Activated CD4-positive, alpha-beta T cell treated with anti-CD3 and anti-CD28 coated beads, Interleukin-2, amount 10 ng/mL, durations not matched to agents 24 days and 14 days (primary cell): ENCODE measurements at regions of chr1 and their contacts with region 1.

Region 1: GRCh38 chr1:23273450-23274133 is 56.3 kb upstream of the HTR1D start:
- DNase-seq: no peak
- H3K4me3 Mint-ChIP-seq: no peak overlapping the region
- H3K27ac Mint-ChIP-seq: no peak overlapping the region
- H3K4me1 Mint-ChIP-seq: no peaks in the 10 kb centered on the region
- H3K27me3 Mint-ChIP-seq: peaks cover 14% of the 10 kb centered on the region

Region 2: DNA sequence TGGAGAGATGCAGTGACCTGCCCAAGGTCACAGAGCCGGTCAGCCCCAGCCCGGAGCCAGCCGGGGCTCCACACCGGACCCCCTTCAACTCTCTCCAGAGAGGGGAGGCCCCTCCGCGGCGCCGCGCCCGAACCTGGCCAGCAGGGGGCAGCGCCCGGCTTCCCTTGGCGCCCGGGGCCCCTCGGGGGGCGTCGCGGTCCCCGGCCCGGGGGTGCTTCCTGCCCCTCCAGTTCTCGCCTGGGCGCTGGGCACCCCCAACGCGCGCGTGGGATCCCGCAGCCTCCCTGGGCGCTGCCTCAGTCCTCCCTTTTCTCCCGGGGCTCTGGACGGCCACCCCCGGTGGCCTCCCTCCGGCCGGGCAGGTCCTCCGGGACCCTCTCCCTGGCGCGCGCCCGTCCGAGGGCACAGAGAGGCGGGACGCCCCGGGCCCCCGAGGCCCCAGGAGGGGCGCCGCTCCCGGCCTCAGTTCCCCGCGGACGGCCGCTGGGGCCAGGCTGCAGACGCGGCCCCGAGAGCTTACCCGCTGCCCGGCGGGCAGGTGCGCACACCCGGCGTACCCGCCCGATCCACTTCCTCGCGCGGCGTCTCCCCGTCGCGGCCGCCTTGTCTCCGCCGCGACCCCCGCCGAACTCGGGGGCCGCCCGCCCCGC is 56.7 kb before region 1 on chr1:
- intact Hi-C with region 1: loop called (anchors 10 kb)
- DNase-seq: peak; percentile 74
- H3K4me3 Mint-ChIP-seq: peak overlapping the region; percentile 22
- H3K27ac Mint-ChIP-seq: no peak overlapping the region
- H3K4me1 Mint-ChIP-seq: peaks cover 4% of the 10 kb centered on the region
- H3K27me3 Mint-ChIP-seq: peaks cover 74% of the 10 kb centered on the region

Region 3: GRCh38 chr1:23249787-23250454 is 23.7 kb before region 1 on chr1:
- intact Hi-C with region 1: no loop called
- DNase-seq: no peak
- H3K4me3 Mint-ChIP-seq: no peak overlapping the region
- H3K27ac Mint-ChIP-seq: no peak overlapping the region
- H3K4me1 Mint-ChIP-seq: no peaks in the 10 kb centered on the region
- H3K27me3 Mint-ChIP-seq: peaks cover 8% of the 10 kb centered on the region

Region 4: DNA sequence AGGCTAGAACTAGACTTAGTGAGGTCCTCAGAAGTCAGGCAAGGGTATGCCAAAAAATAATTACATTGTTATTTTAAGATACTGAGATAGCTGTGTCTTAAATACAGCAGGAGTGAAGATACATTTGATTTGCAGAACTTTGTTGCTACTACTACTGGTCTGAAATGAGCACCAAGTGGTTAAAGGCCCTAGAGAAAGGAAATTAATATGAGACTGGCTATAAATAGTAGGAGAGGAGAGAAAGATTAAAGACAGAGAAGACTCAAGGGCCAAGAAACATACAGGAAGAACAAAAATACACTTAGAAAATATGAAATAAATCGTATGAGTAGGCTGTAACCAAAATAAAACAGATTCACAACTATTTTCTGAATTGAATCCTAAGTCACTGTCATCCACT is 49.2 kb after region 1 on chr1:
- intact Hi-C with region 1: loop called (anchors 2 kb)
- DNase-seq: no peak
- H3K4me3 Mint-ChIP-seq: no peak overlapping the region
- H3K27ac Mint-ChIP-seq: no peak overlapping the region
- H3K4me1 Mint-ChIP-seq: peaks cover 25% of the 10 kb centered on the region
- H3K27me3 Mint-ChIP-seq: no peaks in the 10 kb centered on the region